ENCODE measurements at regions of chr2 and their contacts with region 1.

Region 1: DNA sequence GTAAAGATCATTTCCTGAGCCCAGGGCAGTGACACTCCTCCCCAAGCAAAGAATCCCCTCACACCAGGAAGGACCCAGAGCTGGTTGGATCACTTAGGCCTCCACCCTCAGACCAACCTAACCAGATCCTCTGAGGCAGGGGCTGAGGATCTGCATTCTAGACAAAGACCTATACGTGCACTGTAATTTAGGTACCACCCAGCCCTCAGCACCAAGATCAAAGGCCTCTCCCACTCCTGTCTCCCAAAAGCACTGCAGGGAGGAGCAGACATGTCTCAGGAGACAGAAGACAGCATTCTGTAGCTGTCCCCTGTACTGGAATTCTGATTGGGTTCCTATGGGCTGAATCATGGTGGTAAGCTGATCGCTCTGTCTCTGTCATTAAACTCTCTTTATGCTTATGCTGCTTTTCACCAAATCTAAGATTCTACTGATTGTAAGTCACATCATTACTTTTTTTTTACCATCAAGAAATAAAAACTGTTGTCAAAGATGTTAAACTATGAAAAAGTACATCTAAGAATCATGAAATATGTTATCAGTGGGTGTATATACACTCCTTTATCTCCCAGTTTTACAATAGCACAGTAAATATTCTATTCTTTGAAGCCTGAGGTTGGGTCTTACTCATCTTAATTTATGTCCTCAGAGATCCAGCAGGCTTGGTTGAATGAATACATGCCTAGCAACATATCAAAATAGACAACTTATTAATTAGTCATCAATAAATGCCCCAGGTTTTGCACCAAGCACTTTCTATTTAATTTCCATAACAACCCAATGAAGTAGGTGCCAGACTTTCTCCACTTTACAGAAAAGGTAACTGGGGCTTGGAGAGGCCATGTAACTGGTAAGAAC is 28.3 kb downstream of the MCFD2 start:
- DNase-seq: no peak
- H3K4me3 Mint-ChIP-seq: no peak overlapping the region
- H3K27ac Mint-ChIP-seq: peak overlapping the region; percentile 20
- H3K4me1 Mint-ChIP-seq: peaks cover 9% of the 10 kb centered on the region
- H3K27me3 Mint-ChIP-seq: peaks cover 12% of the 10 kb centered on the region

Region 2: GRCh38 chr2:46632349-46632748 is 254.9 kb before region 1 on chr2:
- CTCF ChIA-PET with region 1: interaction called, 4 read pairs
- POLR2A ChIA-PET with region 1: no interaction called
- intact Hi-C with region 1: loop called (anchors 1 kb)
- DNase-seq: no peak
- H3K4me3 Mint-ChIP-seq: no peak overlapping the region
- H3K27ac Mint-ChIP-seq: no peak overlapping the region
- H3K4me1 Mint-ChIP-seq: peaks cover 7% of the 10 kb centered on the region
- H3K27me3 Mint-ChIP-seq: no peaks in the 10 kb centered on the region

Region 3: DNA sequence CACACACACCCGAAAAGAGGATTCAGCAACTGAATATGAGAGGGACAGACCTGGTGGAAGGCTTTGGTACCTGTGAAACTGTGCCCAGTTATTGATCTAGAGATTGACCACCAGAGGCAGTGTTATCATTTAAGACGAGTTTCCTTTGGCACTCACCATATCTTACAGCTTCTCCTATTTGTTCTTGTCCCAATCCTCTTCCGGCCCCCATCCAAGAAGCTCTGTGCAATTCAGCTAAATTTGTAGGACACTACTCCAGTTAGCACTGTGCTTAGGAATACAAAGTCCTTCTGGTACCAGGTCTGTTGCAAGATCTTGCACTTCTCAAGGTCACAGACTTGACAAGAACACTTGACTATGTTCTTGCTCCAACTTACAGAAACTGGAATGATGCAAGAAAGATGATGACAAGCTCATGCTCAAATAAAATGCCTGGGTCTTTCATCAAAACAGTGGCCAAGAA is 230.2 kb before region 1 on chr2:
- CTCF ChIA-PET with region 1: interaction called, 10 read pairs
- POLR2A ChIA-PET with region 1: no interaction called
- intact Hi-C with region 1: loop called (anchors 2 kb)
- DNase-seq: no peak
- H3K4me3 Mint-ChIP-seq: no peak overlapping the region
- H3K27ac Mint-ChIP-seq: no peak overlapping the region
- H3K4me1 Mint-ChIP-seq: no peaks in the 10 kb centered on the region
- H3K27me3 Mint-ChIP-seq: peaks cover 4% of the 10 kb centered on the region

Region 4: DNA sequence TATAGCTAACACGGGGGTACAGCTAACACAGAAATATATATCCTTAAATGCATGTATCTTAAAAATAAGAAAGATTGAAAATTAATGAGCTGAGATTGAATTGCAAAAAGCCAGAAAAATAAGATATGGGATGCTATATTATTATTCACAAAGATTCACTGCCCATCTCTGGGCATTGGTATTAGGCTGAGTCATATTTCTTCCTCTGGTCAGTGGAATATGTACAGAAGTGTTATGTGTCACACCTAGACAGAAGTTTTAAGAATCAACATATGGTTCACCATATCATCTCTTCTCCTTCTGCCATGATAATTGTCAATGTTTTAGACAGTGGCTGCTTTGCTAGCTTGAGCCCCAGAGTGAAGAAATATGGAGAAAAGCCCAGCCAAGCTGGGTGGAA is 42.4 kb after region 1 on chr2:
- CTCF ChIA-PET with region 1: no interaction called
- POLR2A ChIA-PET with region 1: no interaction called
- intact Hi-C with region 1: no loop called
- DNase-seq: no peak
- H3K4me3 Mint-ChIP-seq: no peak overlapping the region
- H3K27ac Mint-ChIP-seq: no peak overlapping the region
- H3K4me1 Mint-ChIP-seq: peaks cover 7% of the 10 kb centered on the region
- H3K27me3 Mint-ChIP-seq: no peaks in the 10 kb centered on the region

Measured in activated CD4-positive, alpha-beta memory T cell treated with anti-CD3 and anti-CD28 coated beads for 36 hours (primary cell).